ENCODE measurements at regions of chr1 and their contacts with region 1.

Region 1: GRCh38 chr1:37595440-37596319 is at the start of gene GNL2:
- DNase-seq: peak; percentile 69
- H3K4me3 ChIP-seq: peak within 1 kb of the TSS; percentile 84 to 99 (median 97)
- H3K27ac ChIP-seq: peak within 1 kb of the TSS; percentile 95
- H3K4me1 ChIP-seq: peaks cover 16% of the 10 kb centered on the region
- H3K27me3 ChIP-seq: no peaks in the 10 kb centered on the region
- CTCF ChIP-seq: no peak
- polyA plus RNA-seq, gene GNL2: 49.7 to 81.0 TPM (median 52.7 TPM) in 3 replicates

Region 2: GRCh38 chr1:37650173-37650572 is 54.5 kb after region 1 on chr1:
- dilution Hi-C with region 1: no loop called
- DNase-seq: no peak
- H3K4me3 ChIP-seq: no peak overlapping the region
- H3K27ac ChIP-seq: no peak overlapping the region
- H3K4me1 ChIP-seq: no peaks in the 10 kb centered on the region
- H3K27me3 ChIP-seq: no peaks in the 10 kb centered on the region
- CTCF ChIP-seq: no peak

Region 3: DNA sequence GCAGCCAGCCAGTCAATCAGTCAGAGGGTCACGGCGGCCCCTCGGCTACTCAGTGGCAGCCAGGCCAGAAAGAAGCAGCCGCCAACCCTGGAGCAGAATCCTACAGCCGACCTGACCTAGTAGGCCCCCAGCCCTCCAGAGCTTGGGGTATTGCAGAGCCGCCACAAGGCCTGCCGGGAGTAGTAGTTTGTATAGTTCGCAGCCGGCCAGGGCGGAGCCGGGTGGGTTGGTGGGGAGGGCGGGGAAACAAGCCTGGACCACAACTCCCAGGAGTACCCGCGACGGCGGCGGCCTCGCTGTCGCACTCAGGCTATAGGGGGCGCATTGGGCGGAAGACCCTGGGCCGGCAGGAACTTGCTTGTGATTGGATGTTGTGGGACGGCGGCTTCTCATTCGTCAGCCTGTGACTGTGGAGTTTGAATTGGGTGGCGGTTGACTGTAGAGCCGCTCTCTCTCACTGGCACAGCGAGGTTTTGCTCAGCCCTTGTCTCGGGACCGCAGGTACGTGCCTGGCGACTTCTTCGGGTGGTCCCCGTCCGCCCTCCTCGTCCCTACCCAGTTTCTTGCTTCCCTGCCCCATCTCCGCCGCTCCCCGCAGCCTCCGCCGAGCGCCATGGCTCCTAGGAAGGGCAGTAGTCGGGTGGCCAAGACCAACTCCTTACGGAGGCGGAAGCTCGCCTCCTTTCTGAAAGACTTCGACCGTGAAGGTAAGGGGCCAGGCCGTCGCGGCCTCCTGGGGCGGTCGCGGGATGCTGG is 96.6 kb after region 1 on chr1 and contains the start of gene CDCA8:
- dilution Hi-C with region 1: loop called (anchors 25 kb)
- DNase-seq: peak; percentile 84
- H3K4me3 ChIP-seq: peak within 1 kb of the TSS; percentile 80 to 98 (median 96)
- H3K27ac ChIP-seq: peak within 1 kb of the TSS; percentile 90
- H3K4me1 ChIP-seq: peaks cover 20% of the 10 kb centered on the region
- H3K27me3 ChIP-seq: no peaks in the 10 kb centered on the region
- CTCF ChIP-seq: peak; percentile 69 to 78 (median 74)
- polyA plus RNA-seq, gene CDCA8: 3.7 to 22.1 TPM (median 15.1 TPM) in 3 replicates